HCT116 (cell line): ENCODE measurements at regions of chr5 and their contacts with region 1.

Region 1: GRCh38 chr5:176959051-176959450 is 47.5 kb downstream of the UIMC1 start:
- DNase-seq: peak; percentile 10
- ATAC-seq: peak; percentile 78
- H3K4me3 ChIP-seq: no peak overlapping the region
- H3K27ac ChIP-seq: no peak overlapping the region
- H3K4me1 ChIP-seq: no peaks in the 10 kb centered on the region
- H3K27me3 ChIP-seq: no peaks in the 10 kb centered on the region
- CTCF ChIP-seq: peak; percentile 35 to 58 (median 53); a peak in 5 of 6 replicates
- POLR2A ChIP-seq: no peak
- RAD21 ChIP-seq: peak; percentile 71

Region 2: GRCh38 chr5:176700239-176700847 is 258.7 kb before region 1 on chr5:
- CTCF ChIA-PET with region 1: no interaction called
- POLR2A ChIA-PET with region 1: no interaction called
- RAD21 ChIA-PET with region 1: no interaction called
- intact Hi-C with region 1: loop called (anchors 2 kb)
- DNase-seq: no peak
- ATAC-seq: peak; percentile 88
- H3K4me3 ChIP-seq: no peak overlapping the region
- H3K27ac ChIP-seq: no peak overlapping the region
- H3K4me1 ChIP-seq: no peaks in the 10 kb centered on the region
- H3K27me3 ChIP-seq: no peaks in the 10 kb centered on the region
- CTCF ChIP-seq: peak; percentile 52 to 69 (median 65); a peak in 5 of 6 replicates
- POLR2A ChIP-seq: no peak
- RAD21 ChIP-seq: peak; percentile 83

Region 3: DNA sequence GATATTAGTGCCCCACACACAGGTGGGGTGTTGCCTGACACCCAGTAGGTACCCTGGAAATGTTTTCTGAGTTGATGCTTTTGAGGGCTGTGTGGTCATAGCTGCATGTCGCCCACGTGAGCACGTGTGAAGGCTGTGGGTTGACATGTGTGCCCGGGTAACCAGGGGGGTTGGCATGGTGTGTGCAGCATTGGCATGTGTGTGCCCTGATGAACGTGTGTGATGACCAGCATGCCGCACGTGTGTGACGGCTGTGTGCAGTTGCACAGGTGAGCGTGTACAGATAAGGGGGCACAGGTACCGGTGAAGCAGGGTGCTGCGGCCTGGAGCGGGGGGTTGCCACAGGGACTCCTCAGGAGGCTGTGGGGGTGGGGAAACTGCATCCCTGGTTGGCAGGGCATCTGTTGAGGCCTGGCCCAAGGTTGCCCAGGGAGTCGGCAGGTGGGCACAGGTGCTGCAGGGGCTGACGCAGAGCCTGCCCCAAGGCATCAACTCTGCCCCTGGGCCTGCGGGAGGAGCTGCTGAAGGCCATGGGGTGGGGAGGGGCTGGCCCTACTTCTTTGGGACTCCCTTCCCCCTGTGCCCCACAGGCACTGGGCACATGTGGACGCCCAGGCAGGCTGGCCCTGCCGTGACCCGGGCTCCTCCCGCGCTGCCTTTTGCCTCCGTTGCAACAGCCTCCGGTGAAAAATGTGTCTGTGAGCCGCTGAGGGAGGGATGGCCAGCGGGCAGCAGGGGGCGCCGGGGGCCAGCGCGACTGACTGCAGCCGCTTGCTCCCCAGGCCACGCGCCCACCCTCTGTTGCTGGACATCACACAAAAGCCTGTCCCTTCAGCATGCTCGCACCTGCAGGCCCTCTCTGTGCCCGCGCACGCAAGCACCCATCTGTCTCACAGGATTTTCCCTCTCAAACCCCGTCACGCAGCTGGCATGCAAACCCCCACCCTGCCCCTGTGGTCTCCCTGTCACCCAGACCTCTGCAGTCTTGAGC is 146.5 kb before region 1 on chr5:
- CTCF ChIA-PET with region 1: no interaction called
- POLR2A ChIA-PET with region 1: no interaction called
- RAD21 ChIA-PET with region 1: no interaction called
- intact Hi-C with region 1: loop called (anchors 2 kb)
- DNase-seq: no peak
- ATAC-seq: peak; percentile 24
- H3K4me3 ChIP-seq: no peak overlapping the region
- H3K27ac ChIP-seq: no peak overlapping the region
- H3K4me1 ChIP-seq: peaks cover 8 to 36% of the 10 kb centered on the region in 2 experiments
- H3K27me3 ChIP-seq: peaks cover 3% of the 10 kb centered on the region; the same call in 1 of the 2 replicates
- CTCF ChIP-seq: peak in 2 of 3 experiments; percentile 66 to 74; a peak in 4 of 6 replicates
- POLR2A ChIP-seq: no peak
- RAD21 ChIP-seq: no peak